PC-3 (cell line): ENCODE measurements at regions of chr1 and their contacts with region 1.

Region 1: GRCh38 chr1:66253330-66253921 is 280.5 kb upstream of the SGIP1 start:
- DNase-seq: peak; percentile 88
- ATAC-seq: peak; percentile 84
- H3K4me3 ChIP-seq: no peak overlapping the region
- H3K27ac ChIP-seq: no peak overlapping the region
- H3K4me1 ChIP-seq: peaks cover 20% of the 10 kb centered on the region
- H3K27me3 ChIP-seq: 0 out of 2 replicates have a peak, but pooled peaks cover 5% of the 10 kb centered on the region
- CTCF ChIP-seq: peak; percentile 89

Region 2: GRCh38 chr1:66137235-66137634 is 116.2 kb before region 1 on chr1:
- CTCF ChIA-PET with region 1: no interaction called
- POLR2A ChIA-PET with region 1: no interaction called
- intact Hi-C with region 1: no loop called
- DNase-seq: no peak
- ATAC-seq: no peak
- H3K4me3 ChIP-seq: no peak overlapping the region
- H3K27ac ChIP-seq: no peak overlapping the region
- H3K4me1 ChIP-seq: no peaks in the 10 kb centered on the region
- H3K27me3 ChIP-seq: peaks cover 29% of the 10 kb centered on the region; the same call in 1 of the 2 replicates
- CTCF ChIP-seq: no peak

Region 3: DNA sequence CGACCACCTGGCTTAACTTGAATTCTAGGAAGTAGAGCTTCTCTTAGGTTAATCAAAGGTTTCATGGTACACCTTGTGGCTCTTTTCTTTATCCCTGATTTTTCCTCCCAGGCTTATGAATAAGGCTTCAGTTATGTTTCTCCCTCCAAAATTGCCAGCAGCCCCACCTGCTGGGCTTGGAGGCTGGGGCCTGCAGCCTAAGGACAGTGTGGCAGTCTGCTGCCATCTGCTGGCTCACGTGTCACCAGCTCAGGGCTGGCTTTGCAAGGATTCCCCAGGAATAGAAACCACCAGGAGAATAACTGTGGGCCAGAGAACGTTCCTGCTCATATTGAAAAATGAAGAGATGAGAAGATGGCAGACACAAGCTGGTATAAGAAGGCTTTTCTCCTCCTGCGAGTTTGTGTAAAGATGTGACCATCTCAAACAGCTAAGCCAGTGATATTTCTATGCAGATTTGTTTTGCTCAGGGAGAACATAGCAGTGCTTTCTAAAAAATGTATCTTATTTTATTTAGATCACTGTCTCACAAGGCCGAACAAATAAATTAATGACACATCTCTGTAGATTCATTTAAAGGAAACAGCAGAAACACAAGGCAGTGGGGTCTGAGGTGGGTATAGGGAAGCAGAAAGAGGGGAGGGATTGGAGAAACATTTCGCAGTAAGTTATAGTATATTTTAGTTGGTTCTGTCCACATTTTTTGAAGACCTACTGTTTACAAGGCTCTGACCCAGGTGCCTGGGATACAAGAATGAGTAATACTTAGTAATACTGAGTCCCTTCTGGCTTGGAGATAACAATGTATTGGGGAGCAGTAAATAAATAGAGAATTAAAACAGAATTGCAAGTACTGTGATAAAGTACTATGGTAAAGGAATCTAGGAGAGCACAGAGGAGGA is 10.5 kb before region 1 on chr1:
- CTCF ChIA-PET with region 1: no interaction called
- POLR2A ChIA-PET with region 1: no interaction called
- intact Hi-C with region 1: no loop called
- DNase-seq: peak; percentile 94
- ATAC-seq: peak; percentile 97
- H3K4me3 ChIP-seq: no peak overlapping the region
- H3K27ac ChIP-seq: no peak overlapping the region
- H3K4me1 ChIP-seq: peaks cover 15% of the 10 kb centered on the region
- H3K27me3 ChIP-seq: peaks cover under 1% of the 10 kb centered on the region; the same call in 1 of the 2 replicates
- CTCF ChIP-seq: peak; percentile 100

Region 4: GRCh38 chr1:66285618-66286270 is 32.3 kb after region 1 on chr1:
- CTCF ChIA-PET with region 1: no interaction called
- POLR2A ChIA-PET with region 1: no interaction called
- intact Hi-C with region 1: loop called (anchors 2 kb)
- DNase-seq: peak; percentile 83
- ATAC-seq: peak; percentile 71
- H3K4me3 ChIP-seq: no peak overlapping the region
- H3K27ac ChIP-seq: peak overlapping the region; percentile 96
- H3K4me1 ChIP-seq: peaks cover 64% of the 10 kb centered on the region
- H3K27me3 ChIP-seq: no peaks in the 10 kb centered on the region
- CTCF ChIP-seq: no peak

Region 5: GRCh38 chr1:66446261-66447001 is 193.0 kb after region 1 on chr1:
- CTCF ChIA-PET with region 1: interaction called, 6 read pairs
- POLR2A ChIA-PET with region 1: no interaction called
- intact Hi-C with region 1: loop called (anchors 1 kb)
- DNase-seq: peak; percentile 86
- ATAC-seq: peak; percentile 60
- H3K4me3 ChIP-seq: no peak overlapping the region
- H3K27ac ChIP-seq: no peak overlapping the region
- H3K4me1 ChIP-seq: no peaks in the 10 kb centered on the region
- H3K27me3 ChIP-seq: no peaks in the 10 kb centered on the region
- CTCF ChIP-seq: peak; percentile 77

Region 6: DNA sequence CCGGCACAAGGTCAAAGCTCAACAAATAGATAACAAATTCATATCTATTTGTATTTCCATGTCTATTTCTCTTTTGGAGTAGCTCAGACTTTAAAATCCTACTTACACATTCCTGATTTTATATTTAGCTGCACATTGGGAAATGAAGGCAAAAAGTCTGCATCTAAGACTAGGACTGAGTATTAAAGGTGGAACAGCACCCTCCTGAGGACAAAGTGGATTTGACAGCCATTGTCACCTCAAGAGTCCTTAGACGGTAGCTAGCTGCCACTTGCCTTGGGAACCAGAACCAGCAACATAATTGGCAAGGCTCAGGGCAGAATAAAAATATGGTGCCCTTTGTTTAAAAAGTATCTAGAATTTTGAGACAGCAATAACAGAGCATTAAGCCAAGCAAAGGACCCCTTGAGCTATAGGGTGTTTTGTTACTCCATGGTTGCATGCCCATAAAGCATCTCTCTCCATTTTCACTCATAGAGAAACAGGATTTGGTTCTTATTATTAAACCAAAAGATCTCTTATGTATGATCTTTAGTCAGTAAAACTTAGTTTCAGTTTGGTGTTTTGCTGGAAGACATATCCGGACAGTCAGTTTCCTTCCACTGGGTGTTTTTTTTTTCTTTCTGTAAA is 250.5 kb after region 1 on chr1:
- CTCF ChIA-PET with region 1: interaction called, 5 read pairs
- POLR2A ChIA-PET with region 1: no interaction called
- intact Hi-C with region 1: loop called (anchors 1 kb)
- DNase-seq: peak; percentile 85
- ATAC-seq: peak; percentile 88
- H3K4me3 ChIP-seq: 0 out of 2 replicates have a peak overlapping the region, but pooled peaks have one; percentile 18
- H3K27ac ChIP-seq: no peak overlapping the region
- H3K4me1 ChIP-seq: no peaks in the 10 kb centered on the region
- H3K27me3 ChIP-seq: peaks cover 42% of the 10 kb centered on the region
- CTCF ChIP-seq: peak; percentile 88

Region 7: GRCh38 chr1:66725885-66726665 is 472.6 kb after region 1 on chr1:
- CTCF ChIA-PET with region 1: no interaction called
- POLR2A ChIA-PET with region 1: no interaction called
- intact Hi-C with region 1: loop called (anchors 10 kb)
- DNase-seq: peak; percentile 78
- ATAC-seq: peak; percentile 49
- H3K4me3 ChIP-seq: no peak overlapping the region
- H3K27ac ChIP-seq: no peak overlapping the region
- H3K4me1 ChIP-seq: no peaks in the 10 kb centered on the region
- H3K27me3 ChIP-seq: peaks cover 47% of the 10 kb centered on the region
- CTCF ChIP-seq: peak; percentile 96